Ovary (tissue), 10 donors: ENCODE measurements at regions of chr2 and their contacts with region 1.

Region 1: GRCh38 chr2:43239981-43240761 is 13.8 kb upstream of the ZFP36L2 start:
- DNase-seq: no peak
- H3K4me3 ChIP-seq: no peak overlapping the region
- H3K27ac ChIP-seq: peak overlapping the region in 1 of 2 donors; percentile 39
- H3K4me1 ChIP-seq: peaks cover 5% of the 10 kb centered on the region
- H3K27me3 ChIP-seq: no peaks in the 10 kb centered on the region
- CTCF ChIP-seq: no peak
- EP300 ChIP-seq: no peak
- POLR2A ChIP-seq: no peak

Region 2: GRCh38 chr2:42859006-42859552 is 381.1 kb before region 1 on chr2:
- intact Hi-C with region 1: loop called in 1 of 4 experiments (anchors 10 kb)
- DNase-seq: peak in 3 of 5 donors; percentile 58 to 69 (median 63)
- H3K4me3 ChIP-seq: no peak overlapping the region
- H3K27ac ChIP-seq: no peak overlapping the region
- H3K4me1 ChIP-seq: peaks cover 7% of the 10 kb centered on the region
- H3K27me3 ChIP-seq: no peaks in the 10 kb centered on the region
- CTCF ChIP-seq: peak; percentile 54 to 86 (median 73)
- EP300 ChIP-seq: no peak
- POLR2A ChIP-seq: no peak

Region 3: DNA sequence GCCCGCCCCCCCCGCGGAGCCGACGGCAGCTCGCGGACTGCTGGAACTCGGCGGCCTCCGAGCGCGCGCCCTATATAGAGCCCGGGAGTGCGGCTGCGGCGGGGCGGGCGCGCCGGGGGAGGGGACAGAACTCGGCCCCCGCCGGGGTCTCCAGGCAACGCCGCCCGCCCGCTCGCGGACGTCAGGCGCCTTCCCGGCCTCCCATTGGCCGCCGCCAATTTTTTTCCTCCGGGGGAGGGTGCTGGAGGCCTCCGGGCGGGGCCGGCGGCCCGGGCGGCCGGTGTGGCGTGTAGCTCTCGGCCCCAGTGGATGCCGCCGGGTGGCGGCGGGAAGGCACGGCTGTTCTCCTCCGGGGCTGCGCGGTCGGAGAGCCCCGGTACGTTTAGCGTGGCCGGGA is 13.6 kb before region 1 on chr2 and contains the start of gene ZFP36L2:
- intact Hi-C with region 1: no loop called
- DNase-seq: peak; percentile 97 to 98 (median 97)
- H3K4me3 ChIP-seq: peak within 1 kb of the TSS; percentile 84
- H3K27ac ChIP-seq: peak within 1 kb of the TSS; percentile 90 to 92
- H3K4me1 ChIP-seq: peaks cover 15% of the 10 kb centered on the region
- H3K27me3 ChIP-seq: no peaks in the 10 kb centered on the region
- CTCF ChIP-seq: peak in 1 of 3 donors; percentile 40
- EP300 ChIP-seq: no peak
- POLR2A ChIP-seq: peak; percentile 77
- total RNA-seq, gene ZFP36L2: 115 to 369 (median 254) TPM

Region 4: GRCh38 chr2:43707255-43708015 is 467.3 kb after region 1 on chr2:
- intact Hi-C with region 1: loop called in 1 of 4 experiments (anchors 10 kb)
- DNase-seq: peak in 4 of 5 donors; percentile 43 to 72 (median 46)
- H3K4me3 ChIP-seq: no peak overlapping the region
- H3K27ac ChIP-seq: no peak overlapping the region
- H3K4me1 ChIP-seq: no peaks in the 10 kb centered on the region
- H3K27me3 ChIP-seq: no peaks in the 10 kb centered on the region
- CTCF ChIP-seq: no peak
- EP300 ChIP-seq: no peak
- POLR2A ChIP-seq: no peak